ENCODE measurements at regions of chr14 and their contacts with region 1.

Region 1: DNA sequence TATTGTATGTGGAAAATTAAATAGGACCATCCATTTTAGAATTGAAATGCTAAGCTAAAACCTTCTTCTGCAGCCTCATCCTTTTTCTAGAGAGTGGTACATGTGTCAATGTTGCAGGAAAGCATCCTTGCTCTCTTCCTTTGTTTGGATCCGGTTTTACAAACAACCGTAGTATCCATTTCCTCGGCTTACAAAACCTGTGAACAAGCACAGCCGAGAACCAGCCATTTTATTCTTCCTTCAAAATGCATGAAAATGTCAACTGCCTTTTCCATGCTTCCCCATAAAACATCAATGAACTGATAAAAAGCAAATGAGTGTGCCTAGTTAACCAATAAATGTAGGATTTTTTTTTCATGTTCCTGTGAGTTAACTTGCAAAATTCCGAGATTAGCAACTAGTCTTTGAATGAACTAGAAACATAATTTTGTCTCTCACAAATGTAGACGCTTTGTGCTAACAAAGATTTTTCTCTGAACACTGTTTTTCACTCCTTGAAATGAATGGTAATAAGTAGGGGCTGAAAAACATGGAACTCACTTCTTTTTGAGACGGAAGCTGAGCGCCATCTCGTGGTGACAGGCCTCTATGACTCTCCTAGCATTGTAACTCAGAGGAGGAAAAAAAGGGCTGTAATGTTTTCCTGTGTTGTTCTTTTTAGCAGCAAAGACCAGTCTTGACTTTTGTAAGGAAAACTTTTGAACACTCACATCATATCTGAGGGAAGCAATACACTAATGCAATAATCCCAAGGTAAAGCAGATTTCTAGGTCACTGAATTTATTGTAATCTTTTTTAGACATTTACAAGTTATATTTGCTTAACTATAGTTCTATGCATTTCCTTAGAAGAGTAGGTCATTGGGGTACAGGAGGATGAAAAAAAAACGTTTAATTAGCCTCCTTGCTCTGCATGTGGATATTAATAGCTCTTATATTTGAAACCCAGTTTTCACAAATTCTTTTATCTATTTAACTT is 157.4 kb upstream of the FOXG1 start:
- DNase-seq: peak; percentile 72
- H3K4me3 ChIP-seq: no peak overlapping the region
- H3K27ac ChIP-seq: no peak overlapping the region
- H3K4me1 ChIP-seq: no peaks in the 10 kb centered on the region
- H3K27me3 ChIP-seq: peaks cover 6% of the 10 kb centered on the region
- CTCF ChIP-seq: peak; percentile 93

Region 2: DNA sequence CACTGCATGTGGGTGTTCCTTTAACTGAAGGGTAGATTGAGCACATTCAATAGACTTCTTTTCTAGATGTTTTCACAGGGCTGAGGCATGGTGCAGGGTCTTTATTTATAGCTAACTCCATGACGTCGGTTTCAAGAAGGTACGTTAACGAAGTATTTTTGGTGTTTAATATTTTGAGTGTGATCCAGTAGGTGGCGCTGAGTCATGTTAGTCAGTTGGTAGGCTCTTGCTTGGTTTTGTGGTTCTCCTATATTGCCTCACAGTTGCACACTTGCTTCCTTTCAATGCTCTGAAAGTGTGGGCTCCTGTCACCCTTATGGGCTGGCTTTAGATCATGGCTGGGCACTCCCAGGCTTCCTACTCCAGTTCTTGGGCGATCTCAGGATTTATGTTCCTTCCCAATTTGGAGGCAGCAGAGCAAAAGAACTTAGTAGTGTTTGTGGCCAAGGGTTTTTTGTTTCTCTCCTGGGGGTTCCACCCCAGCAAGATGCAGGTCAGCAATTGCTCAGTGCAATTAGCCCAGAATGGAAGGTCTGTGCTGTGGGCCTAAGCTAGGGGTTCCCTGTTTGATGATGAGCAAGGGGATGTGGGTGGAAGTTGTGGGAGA is 314.2 kb before region 1 on chr14:
- CTCF ChIA-PET with region 1: no interaction called
- POLR2A ChIA-PET with region 1: no interaction called
- intact Hi-C with region 1: loop called (anchors 1 kb)
- DNase-seq: peak; percentile 52
- H3K4me3 ChIP-seq: no peak overlapping the region
- H3K27ac ChIP-seq: no peak overlapping the region
- H3K4me1 ChIP-seq: no peaks in the 10 kb centered on the region
- H3K27me3 ChIP-seq: no peaks in the 10 kb centered on the region
- CTCF ChIP-seq: peak; percentile 65

Region 3: DNA sequence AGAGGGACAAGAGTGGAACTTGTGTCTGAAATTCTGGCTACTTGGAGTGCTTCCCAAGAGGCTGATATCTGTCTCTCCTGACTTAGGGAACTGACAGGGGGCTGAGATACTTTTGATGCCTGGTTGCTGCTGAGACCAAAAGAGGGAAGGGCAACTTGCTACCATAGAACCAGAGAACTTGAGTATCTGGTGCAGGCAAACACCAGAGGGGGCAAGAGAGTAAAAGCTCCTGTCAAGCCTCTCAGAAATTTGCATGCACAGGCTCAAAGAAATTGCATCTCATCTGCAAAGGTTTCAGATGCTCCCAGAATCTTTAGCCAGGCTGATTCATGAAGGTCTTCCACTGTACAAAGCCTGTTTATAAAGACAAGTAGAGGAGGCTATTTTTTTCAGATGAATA is 233.8 kb before region 1 on chr14:
- CTCF ChIA-PET with region 1: interaction called, 4 read pairs
- POLR2A ChIA-PET with region 1: no interaction called
- intact Hi-C with region 1: loop called (anchors 1 kb)
- DNase-seq: peak; percentile 44
- H3K4me3 ChIP-seq: no peak overlapping the region
- H3K27ac ChIP-seq: no peak overlapping the region
- H3K4me1 ChIP-seq: no peaks in the 10 kb centered on the region
- H3K27me3 ChIP-seq: no peaks in the 10 kb centered on the region
- CTCF ChIP-seq: peak; percentile 49

Region 4: DNA sequence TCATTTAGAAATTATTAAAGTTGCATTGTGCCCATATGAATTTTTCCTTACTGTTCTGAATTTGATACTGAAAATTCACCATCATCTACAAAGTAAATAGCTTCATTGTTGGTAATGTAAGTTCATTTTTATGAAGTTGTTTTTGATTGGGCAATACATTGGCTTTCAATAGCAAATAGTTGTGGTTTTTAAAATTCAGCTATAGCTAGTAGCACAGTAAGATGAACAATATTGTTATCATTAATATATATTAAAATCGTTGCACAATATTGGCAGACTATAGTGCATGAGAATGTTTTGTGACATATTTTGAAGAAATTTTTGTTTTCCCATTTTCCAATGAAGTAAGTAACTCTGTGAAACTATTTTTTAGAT is 743.6 kb after region 1 on chr14:
- CTCF ChIA-PET with region 1: no interaction called
- POLR2A ChIA-PET with region 1: no interaction called
- intact Hi-C with region 1: no loop called
- DNase-seq: no peak
- H3K4me3 ChIP-seq: no peak overlapping the region
- H3K27ac ChIP-seq: no peak overlapping the region
- H3K4me1 ChIP-seq: no peaks in the 10 kb centered on the region
- H3K27me3 ChIP-seq: peaks cover 49% of the 10 kb centered on the region
- CTCF ChIP-seq: no peak

Measured in A673 (cell line).